ENCODE measurements at regions of chrX and their contacts with region 1.

Region 1: GRCh38 chrX:24054182-24055042 is at the start of gene EIF2S3:
- DNase-seq: peak; percentile 73
- ATAC-seq: peak; percentile 80
- H3K4me3 Mint-ChIP-seq: no peak within 1 kb of the TSS
- H3K27ac Mint-ChIP-seq: peak within 1 kb of the TSS; percentile 99
- H3K4me1 Mint-ChIP-seq: peaks cover 4% of the 10 kb centered on the region
- H3K27me3 Mint-ChIP-seq: no peaks in the 10 kb centered on the region
- CTCF ChIP-seq: no peak
- total RNA-seq, gene EIF2S3: 281 and 314 TPM in 2 replicates

Region 2: DNA sequence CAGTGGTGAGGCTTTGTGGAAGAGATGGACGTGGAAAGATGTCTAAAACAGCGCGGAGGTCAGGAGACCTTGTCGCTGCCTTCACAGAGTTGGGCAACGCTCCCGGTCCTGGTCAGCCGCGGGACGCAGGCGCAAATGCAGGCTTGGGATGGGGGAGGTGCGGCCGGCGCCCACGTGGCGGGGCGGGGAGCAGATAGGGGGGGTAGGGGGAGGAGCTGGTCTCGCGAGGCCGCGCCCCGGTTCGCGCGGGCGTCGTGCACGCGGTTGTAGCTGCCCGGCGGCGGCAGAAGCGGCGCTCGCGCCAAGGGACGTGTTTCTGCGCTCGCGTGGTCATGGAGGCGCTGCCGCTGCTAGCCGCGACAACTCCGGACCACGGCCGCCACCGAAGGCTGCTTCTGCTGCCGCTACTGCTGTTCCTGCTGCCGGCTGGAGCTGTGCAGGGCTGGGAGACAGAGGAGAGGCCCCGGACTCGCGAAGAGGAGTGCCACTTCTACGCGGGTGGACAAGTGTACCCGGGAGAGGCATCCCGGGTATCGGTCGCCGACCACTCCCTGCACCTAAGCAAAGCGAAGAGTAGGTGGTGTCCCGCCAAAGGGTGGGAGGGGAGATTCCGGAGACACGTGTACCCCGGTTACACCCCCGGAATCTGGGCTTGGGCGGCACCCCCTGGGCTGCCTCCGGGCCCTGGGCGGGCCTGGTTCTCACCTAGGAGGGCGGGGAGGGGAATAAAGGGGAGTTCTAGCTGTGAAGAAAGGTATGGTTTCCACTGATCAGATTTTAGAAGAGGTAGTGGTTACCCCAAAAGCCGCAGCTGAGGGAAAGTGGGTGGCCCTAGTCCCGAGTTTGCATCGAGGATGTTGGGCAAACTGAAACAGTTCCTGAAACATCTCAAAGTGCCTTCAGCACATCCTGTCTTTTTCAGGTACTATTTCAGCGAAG is 386.9 kb before region 1 on chrX and contains the start of gene PRDX4:
- CTCF ChIA-PET with region 1: no interaction called
- POLR2A ChIA-PET with region 1: interaction called, 13 read pairs
- intact Hi-C with region 1: no loop called
- DNase-seq: peak; percentile 66
- ATAC-seq: peak; percentile 85
- H3K4me3 Mint-ChIP-seq: peak within 1 kb of the TSS; percentile 84
- H3K27ac Mint-ChIP-seq: peak within 1 kb of the TSS; percentile 91
- H3K4me1 Mint-ChIP-seq: peaks cover 25% of the 10 kb centered on the region
- H3K27me3 Mint-ChIP-seq: no peaks in the 10 kb centered on the region
- CTCF ChIP-seq: no peak
- total RNA-seq, gene PRDX4: 29.2 and 35.5 TPM in 2 replicates

Region 3: DNA sequence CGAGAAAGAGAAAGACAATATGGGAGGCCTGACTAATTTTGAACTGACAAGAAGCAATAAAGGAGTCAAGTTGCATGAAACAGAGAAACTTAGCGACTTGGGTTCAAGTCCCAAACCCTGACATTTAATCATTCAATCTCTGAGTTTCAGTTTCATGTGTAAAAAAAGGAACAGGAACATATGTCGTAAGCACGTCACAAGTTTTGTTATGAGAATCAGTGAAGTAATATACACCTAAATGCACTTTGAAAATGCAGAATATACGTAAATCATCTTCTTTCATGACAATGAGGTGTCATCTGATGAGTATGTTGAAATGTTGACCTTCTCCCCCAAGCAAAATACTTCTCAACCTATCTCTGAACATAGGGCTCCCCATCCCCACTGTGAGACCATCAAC is 321.7 kb before region 1 on chrX:
- CTCF ChIA-PET with region 1: no interaction called
- POLR2A ChIA-PET with region 1: interaction called, 5 read pairs
- intact Hi-C with region 1: loop called (anchors 2 kb)
- DNase-seq: no peak
- ATAC-seq: peak; percentile 77
- H3K4me3 Mint-ChIP-seq: peak overlapping the region; percentile 37
- H3K27ac Mint-ChIP-seq: peak overlapping the region; percentile 80
- H3K4me1 Mint-ChIP-seq: peaks cover 18% of the 10 kb centered on the region
- H3K27me3 Mint-ChIP-seq: no peaks in the 10 kb centered on the region
- CTCF ChIP-seq: no peak

Region 4: GRCh38 chrX:23901805-23902204 is 152.6 kb before region 1 on chrX:
- CTCF ChIA-PET with region 1: interaction called, 32 read pairs
- POLR2A ChIA-PET with region 1: interaction called, 59 read pairs
- intact Hi-C with region 1: no loop called
- DNase-seq: no peak
- ATAC-seq: peak; percentile 87
- H3K4me3 Mint-ChIP-seq: no peak overlapping the region
- H3K27ac Mint-ChIP-seq: no peak overlapping the region
- H3K4me1 Mint-ChIP-seq: peaks cover 4% of the 10 kb centered on the region
- H3K27me3 Mint-ChIP-seq: no peaks in the 10 kb centered on the region
- CTCF ChIP-seq: no peak

Region 5: DNA sequence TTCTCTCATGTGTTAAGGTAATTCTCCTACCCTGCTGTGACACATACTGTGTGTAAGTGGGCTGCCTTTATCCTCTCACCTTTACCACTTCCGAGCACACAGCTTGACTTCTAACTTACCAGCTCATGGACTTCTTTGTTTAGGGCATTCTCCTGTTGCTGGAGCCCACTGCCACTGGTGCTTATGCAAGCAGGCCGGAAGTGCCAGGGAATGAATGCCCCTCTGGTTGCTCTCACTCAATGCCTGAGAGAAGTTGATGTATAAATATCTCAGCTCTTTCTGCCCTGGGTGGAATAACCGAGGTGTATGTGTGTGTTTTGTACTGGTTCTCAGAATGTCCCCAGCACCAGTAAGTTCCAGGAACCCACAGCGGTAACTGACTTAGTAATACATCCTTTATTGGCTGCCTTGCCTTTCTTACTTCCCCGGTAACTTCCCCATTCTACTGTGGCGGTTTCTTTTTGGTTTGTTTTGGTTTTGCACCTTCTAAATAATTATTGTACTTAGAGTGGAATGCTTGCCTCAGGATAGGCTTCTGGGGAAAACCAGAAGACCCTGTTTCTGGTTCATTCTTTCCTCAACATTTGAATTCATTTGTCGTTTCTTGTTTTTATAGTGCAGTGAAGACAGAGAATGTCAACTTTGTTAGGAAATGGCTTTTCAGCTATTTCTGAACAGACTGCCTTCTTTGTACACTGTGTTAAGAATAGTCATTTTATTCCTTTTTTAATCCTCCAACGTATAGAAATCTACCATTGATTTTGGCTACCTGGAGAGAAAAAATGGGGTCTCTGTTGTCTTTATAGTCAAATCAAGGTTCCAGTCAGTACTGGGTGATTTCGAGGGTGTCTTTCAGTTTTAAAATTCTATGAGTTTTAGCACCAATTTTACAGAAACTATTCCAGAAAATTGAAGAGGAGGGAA is 101.2 kb before region 1 on chrX:
- CTCF ChIA-PET with region 1: no interaction called
- POLR2A ChIA-PET with region 1: interaction called, 12 read pairs
- intact Hi-C with region 1: loop called (anchors 10 kb)
- DNase-seq: peak; percentile 13
- ATAC-seq: peak; percentile 92
- H3K4me3 Mint-ChIP-seq: peak overlapping the region; percentile 72
- H3K27ac Mint-ChIP-seq: peak overlapping the region; percentile 90
- H3K4me1 Mint-ChIP-seq: peaks cover 12% of the 10 kb centered on the region
- H3K27me3 Mint-ChIP-seq: no peaks in the 10 kb centered on the region
- CTCF ChIP-seq: no peak

Region 6: DNA sequence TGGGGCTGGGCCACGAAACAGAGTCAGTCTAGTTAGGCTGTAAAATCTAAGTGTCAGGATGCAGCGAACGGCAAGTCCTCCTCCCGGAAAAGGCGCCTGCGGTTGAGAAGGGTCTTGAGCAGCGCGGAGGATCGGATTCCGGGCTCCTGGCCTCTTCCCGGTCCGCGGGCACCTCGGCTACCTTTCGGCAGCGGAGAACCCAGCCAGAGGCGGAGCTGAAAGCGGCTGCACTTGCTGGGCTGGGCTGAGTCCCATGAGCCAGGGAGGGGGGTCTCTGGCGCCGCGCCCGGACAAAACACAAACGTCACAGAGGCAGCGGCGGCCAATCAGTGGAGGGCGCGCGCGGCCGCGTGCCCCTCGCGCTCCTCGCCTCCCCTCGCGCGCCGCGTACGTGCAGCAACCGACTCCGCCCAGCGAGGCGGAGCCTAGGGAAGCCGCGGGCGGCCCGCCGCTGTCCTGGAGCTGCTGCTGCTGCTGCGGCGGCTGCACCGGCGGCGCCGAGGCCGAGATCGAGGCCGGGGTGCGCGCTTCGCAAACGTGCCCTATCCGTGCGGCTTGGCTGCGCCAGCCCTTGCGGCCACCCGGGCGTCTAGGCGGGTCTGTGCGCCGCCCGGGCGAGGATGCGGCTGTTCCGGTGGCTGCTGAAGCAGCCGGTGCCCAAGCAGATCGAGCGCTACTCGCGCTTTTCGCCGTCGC is 410.6 kb after region 1 on chrX and contains the start of gene PDK3:
- CTCF ChIA-PET with region 1: no interaction called
- POLR2A ChIA-PET with region 1: no interaction called
- intact Hi-C with region 1: loop called (anchors 5 kb)
- DNase-seq: peak; percentile 77
- ATAC-seq: peak; percentile 95
- H3K4me3 Mint-ChIP-seq: peak within 1 kb of the TSS; percentile 84
- H3K27ac Mint-ChIP-seq: peak within 1 kb of the TSS; percentile 83
- H3K4me1 Mint-ChIP-seq: peaks cover 47% of the 10 kb centered on the region
- H3K27me3 Mint-ChIP-seq: no peaks in the 10 kb centered on the region
- CTCF ChIP-seq: no peak
- total RNA-seq, gene PDK3: 13.6 and 13.9 TPM in 2 replicates

Region 7: DNA sequence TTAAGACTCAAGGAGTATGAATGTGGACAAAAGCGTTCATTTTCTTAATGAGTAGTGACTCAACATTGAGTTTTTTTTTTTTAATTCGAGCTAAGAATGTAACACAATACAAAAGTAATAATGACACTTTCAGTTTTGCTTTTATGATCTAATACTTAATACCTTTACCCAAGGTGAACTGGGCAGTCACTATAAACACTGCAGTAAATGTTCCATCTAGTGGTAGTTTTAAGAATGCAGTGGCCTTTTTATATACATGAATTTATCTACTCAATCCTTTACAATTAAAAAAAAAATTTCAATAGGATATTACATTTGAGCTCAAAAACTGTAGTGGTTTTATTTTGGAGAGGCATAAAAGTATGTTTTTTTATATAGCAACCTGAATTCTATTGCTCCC is 444.6 kb after region 1 on chrX:
- CTCF ChIA-PET with region 1: no interaction called
- POLR2A ChIA-PET with region 1: no interaction called
- intact Hi-C with region 1: no loop called
- DNase-seq: no peak
- ATAC-seq: peak; percentile 60
- H3K4me3 Mint-ChIP-seq: no peak overlapping the region
- H3K27ac Mint-ChIP-seq: no peak overlapping the region
- H3K4me1 Mint-ChIP-seq: peaks cover 12% of the 10 kb centered on the region
- H3K27me3 Mint-ChIP-seq: no peaks in the 10 kb centered on the region
- CTCF ChIP-seq: no peak